ENCODE measurements at regions of chr4 and their contacts with region 1.

Region 1: DNA sequence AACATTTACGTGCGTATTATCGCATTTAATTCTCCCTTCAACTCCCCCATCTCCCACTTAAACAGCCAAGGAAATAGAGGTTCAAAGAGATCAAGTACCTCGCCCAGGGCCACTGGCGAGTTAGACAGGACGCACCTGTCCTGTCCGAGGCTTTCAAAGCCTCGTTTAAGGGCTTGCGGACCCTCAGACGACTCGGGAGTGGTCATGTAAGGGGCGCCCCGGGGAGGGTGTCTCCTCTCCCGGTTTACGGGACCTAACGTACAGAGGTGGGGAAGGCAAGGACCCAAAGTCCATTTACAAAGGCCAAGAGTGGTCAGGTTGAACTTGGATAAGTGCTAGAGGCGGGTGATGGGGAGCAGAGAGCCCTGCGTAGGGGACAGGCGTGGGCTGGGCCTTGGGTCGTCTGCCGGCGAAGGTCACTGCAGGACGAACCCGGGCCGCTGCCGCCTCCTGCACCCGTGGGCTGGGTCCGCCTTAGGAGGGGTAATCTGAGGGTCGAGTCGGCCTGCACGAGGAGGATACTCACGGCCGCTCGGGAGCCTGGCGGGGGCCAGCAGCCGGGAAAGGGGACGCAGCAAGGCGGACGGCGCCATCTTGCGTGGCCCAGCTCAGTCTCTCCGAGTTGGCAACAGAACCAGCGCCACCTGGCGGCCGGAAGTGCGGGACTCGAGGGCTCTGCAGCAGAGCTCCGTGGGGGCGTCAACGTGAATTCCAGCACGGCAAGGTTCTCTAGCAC is 5.9 kb upstream of the NAA15 start:
- DNase-seq: peak; percentile 99
- ATAC-seq: peak; percentile 96

Region 2: GRCh38 chr4:139083956-139084803 is 211.2 kb before region 1 on chr4:
- intact Hi-C with region 1: loop called (anchors 10 kb)
- DNase-seq: peak; percentile 93
- ATAC-seq: peak; percentile 81

Region 3: DNA sequence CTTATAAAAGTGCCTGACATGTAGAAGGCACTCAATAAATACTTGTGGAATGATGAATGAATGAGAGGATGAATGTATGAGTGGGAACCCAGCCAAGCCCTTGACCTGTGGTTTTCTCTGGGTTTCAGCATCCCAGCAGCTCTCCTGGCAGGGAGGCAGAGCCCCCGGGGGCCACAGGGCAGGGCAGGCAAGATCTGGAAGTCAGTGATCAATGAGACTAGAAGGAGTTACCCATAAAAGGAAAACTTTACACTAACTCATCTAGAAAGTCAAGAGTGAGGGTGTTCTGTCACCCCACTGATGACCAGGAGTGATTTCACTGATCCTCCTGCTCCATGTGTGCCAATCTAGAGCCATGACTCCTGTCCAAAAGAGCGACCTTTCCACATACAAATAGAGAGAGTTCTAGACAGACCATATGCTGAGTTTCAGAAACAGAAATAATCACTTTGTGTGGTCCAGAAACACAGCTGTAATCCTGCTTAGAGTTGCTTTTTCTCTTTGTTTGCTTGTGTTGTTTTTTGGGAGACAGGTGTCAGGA is 52.8 kb before region 1 on chr4:
- intact Hi-C with region 1: no loop called
- DNase-seq: no peak
- ATAC-seq: no peak